ENCODE measurements at regions of chr21 and their contacts with region 1.

Region 1: GRCh38 chr21:33844104-33844889 is 71.3 kb downstream of the ATP5PO start:
- DNase-seq: peak; percentile 84
- H3K4me3 ChIP-seq: no peak overlapping the region
- H3K27me3 ChIP-seq: no peaks in the 10 kb centered on the region
- CTCF ChIP-seq: no peak

Region 2: GRCh38 chr21:33894736-33895288 is 50.5 kb after region 1 on chr21:
- CTCF ChIA-PET with region 1: interaction called, 10 read pairs
- POLR2A ChIA-PET with region 1: interaction called, 3 read pairs
- DNase-seq: peak; percentile 38
- H3K4me3 ChIP-seq: peak overlapping the region; percentile 16
- H3K27me3 ChIP-seq: no peaks in the 10 kb centered on the region
- CTCF ChIP-seq: peak; percentile 91

Region 3: DNA sequence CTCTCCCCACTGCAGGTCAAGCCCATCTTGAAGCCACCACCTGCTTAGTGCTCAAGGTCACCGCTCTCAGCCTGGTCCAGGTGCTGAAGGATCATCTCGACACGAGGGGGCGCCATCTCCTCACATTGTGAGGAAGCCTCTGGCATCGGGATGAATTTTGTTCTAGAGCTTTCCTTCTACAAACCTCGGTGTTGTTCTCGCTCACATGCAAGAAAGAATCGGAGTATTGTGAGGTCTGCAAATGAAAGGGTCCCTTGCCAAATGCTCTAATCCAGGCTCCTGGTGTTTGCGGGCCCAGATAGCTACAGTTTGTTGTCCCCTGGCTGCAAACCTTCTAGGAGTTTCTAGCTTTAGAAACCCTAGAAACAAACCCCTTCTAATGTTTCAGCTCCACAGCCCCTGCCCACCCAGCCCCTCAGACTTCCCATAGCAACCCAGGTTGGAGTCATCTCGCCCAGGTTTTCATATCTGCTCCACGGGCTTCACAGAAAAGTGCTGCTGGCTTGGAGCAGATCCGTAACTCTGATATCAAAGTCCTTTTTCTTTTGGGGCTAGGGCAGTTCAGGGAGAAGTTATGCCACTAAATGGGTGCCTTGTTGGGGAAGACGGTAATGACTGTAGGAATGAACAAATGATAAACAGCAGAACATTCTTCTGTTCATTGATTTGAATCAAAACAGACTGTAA is 79.9 kb after region 1 on chr21:
- CTCF ChIA-PET with region 1: no interaction called
- POLR2A ChIA-PET with region 1: no interaction called
- DNase-seq: no peak
- H3K4me3 ChIP-seq: no peak overlapping the region
- H3K27me3 ChIP-seq: no peaks in the 10 kb centered on the region
- CTCF ChIP-seq: peak; percentile 86